ENCODE measurements at regions of chr11 and their contacts with region 1.

Region 1: DNA sequence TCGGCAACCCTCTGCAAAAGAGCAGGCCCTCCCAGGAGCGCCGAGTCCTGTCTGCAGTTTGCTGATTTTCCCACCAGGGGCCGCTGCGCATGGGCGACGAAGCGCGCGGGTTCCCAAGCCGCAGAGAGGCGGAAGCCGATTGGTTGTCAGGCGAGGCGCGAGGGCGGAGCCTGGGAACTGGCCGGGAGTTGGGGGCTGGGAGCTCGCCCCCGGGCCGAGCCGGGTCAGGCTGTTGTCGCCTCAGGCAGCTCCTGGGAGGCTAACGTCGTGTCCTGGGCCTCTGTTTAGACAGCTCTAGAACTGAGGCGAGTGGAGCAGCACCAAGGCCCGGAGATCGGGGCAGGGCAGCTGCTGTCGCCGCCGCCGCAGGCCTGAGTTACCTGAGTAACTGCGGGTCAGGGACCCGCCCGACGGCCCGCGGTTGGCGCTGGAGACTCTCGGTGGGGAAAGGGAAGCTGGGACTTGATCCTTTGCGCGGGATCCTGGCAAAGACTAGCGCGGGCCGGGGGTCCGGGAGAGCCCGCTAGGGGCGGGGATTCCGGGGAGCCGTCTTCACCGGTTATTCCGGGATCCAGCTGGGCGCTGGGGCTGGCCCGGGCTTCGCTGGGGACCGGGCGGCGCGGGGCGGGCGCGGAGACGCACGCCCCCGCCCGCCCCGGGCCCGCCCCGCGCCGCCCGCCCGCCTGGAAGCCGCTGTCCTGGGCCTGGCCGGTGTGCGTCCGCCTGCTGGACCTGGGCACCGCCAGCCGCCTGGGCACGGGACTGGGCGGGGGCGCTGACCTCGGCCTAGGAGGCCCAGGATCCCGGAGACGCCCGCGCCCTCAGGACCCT is at the start of gene STIM1:
- DNase-seq: peak; percentile 92 to 99 (median 97)
- ATAC-seq: peak; percentile 73 to 80 (median 74)
- H3K4me3 ChIP-seq: peak within 1 kb of the TSS; percentile 85 to 94
- H3K4me3 Mint-ChIP-seq: peak within 1 kb of the TSS; percentile 95 to 99 (median 98)
- H3K27ac ChIP-seq: peak within 1 kb of the TSS; percentile 96
- H3K27ac Mint-ChIP-seq: peak within 1 kb of the TSS; percentile 99
- H3K4me1 ChIP-seq: peaks cover 55 to 61% of the 10 kb centered on the region in 2 experiments
- H3K4me1 Mint-ChIP-seq: peaks cover 60 to 74% (median 68%) of the 10 kb centered on the region in 3 donors
- H3K27me3 ChIP-seq: no peaks in the 10 kb centered on the region
- H3K27me3 Mint-ChIP-seq: no peaks in the 10 kb centered on the region
- total RNA-seq, gene STIM1: 87.6 to 139 (median 94.5) TPM

Region 2: DNA sequence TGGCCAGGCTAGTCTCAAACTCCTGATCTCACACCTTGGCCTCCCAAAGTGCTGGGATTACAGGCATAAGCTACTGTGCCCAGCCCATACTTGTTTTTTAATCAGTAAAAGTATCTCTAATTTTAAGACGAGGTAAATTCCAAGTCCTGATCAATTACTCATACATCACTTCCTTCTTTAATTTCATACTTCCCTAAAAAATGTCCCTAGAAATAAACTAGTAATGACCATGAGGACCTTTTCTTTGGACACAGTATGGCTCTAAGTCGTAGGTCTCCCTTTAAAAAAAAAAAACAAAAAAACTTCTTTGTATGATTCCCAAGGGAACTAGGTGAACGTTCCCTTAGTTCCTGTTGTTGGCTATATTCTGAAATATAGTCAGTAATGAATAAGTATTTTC is 87.7 kb before region 1 on chr11:
- CTCF ChIA-PET with region 1: no interaction called
- POLR2A ChIA-PET with region 1: no interaction called
- DNase-seq: no peak
- ATAC-seq: no peak
- H3K4me3 ChIP-seq: no peak overlapping the region
- H3K4me3 Mint-ChIP-seq: no peak overlapping the region
- H3K27ac ChIP-seq: no peak overlapping the region
- H3K27ac Mint-ChIP-seq: no peak overlapping the region
- H3K4me1 ChIP-seq: no peaks in the 10 kb centered on the region
- H3K4me1 Mint-ChIP-seq: no peaks in the 10 kb centered on the region
- H3K27me3 ChIP-seq: no peaks in the 10 kb centered on the region
- H3K27me3 Mint-ChIP-seq: no peaks in the 10 kb centered on the region

Region 3: GRCh38 chr11:3835751-3836150 is 19.4 kb before region 1 on chr11:
- CTCF ChIA-PET with region 1: interaction called, 29 to 248 read pairs
- POLR2A ChIA-PET with region 1: interaction called, 4 to 58 read pairs
- DNase-seq: no peak
- ATAC-seq: no peak
- H3K4me3 ChIP-seq: no peak overlapping the region
- H3K4me3 Mint-ChIP-seq: peak overlapping the region; percentile 64 to 89 (median 68)
- H3K27ac ChIP-seq: peak overlapping the region; percentile 47
- H3K27ac Mint-ChIP-seq: peak overlapping the region; percentile 90 to 94
- H3K4me1 ChIP-seq: peaks cover 59 to 90% of the 10 kb centered on the region in 2 experiments
- H3K4me1 Mint-ChIP-seq: peaks cover 90 to 94% (median 91%) of the 10 kb centered on the region in 3 donors
- H3K27me3 ChIP-seq: no peaks in the 10 kb centered on the region
- H3K27me3 Mint-ChIP-seq: no peaks in the 10 kb centered on the region

Region 4: GRCh38 chr11:3841426-3842350 is 13.5 kb before region 1 on chr11:
- CTCF ChIA-PET with region 1: interaction called, 29 to 248 read pairs
- POLR2A ChIA-PET with region 1: interaction called, 12 to 58 read pairs
- DNase-seq: peak in 34 of 35 experiments; percentile 88 to 98 (median 96)
- ATAC-seq: peak; percentile 77 to 82 (median 78)
- H3K4me3 ChIP-seq: peak overlapping the region in 1 of 2 donors; percentile 88
- H3K4me3 Mint-ChIP-seq: peak overlapping the region; percentile 85 to 89 (median 86)
- H3K27ac ChIP-seq: peak overlapping the region; percentile 98
- H3K27ac Mint-ChIP-seq: peak overlapping the region; percentile 96
- H3K4me1 ChIP-seq: peaks cover 44 to 48% of the 10 kb centered on the region in 2 experiments
- H3K4me1 Mint-ChIP-seq: peaks cover 56 to 60% (median 56%) of the 10 kb centered on the region in 3 donors
- H3K27me3 ChIP-seq: no peaks in the 10 kb centered on the region
- H3K27me3 Mint-ChIP-seq: no peaks in the 10 kb centered on the region

Region 5: GRCh38 chr11:3867209-3868091 is 12.3 kb after region 1 on chr11:
- CTCF ChIA-PET with region 1: interaction called, 4 to 17 read pairs
- POLR2A ChIA-PET with region 1: interaction called, 3 to 5 read pairs
- DNase-seq: peak in 7 of 35 experiments; percentile 4 to 56 (median 18)
- ATAC-seq: peak; percentile 33 to 71 (median 49)
- H3K4me3 ChIP-seq: no peak overlapping the region
- H3K4me3 Mint-ChIP-seq: peak overlapping the region in 2 of 3 donors; percentile 47 to 58
- H3K27ac ChIP-seq: peak overlapping the region; percentile 34
- H3K27ac Mint-ChIP-seq: peak overlapping the region; percentile 83 to 92
- H3K4me1 ChIP-seq: peaks cover 54 to 63% of the 10 kb centered on the region in 2 experiments
- H3K4me1 Mint-ChIP-seq: peaks cover 90 to 96% (median 92%) of the 10 kb centered on the region in 3 donors
- H3K27me3 ChIP-seq: no peaks in the 10 kb centered on the region
- H3K27me3 Mint-ChIP-seq: no peaks in the 10 kb centered on the region

Region 6: DNA sequence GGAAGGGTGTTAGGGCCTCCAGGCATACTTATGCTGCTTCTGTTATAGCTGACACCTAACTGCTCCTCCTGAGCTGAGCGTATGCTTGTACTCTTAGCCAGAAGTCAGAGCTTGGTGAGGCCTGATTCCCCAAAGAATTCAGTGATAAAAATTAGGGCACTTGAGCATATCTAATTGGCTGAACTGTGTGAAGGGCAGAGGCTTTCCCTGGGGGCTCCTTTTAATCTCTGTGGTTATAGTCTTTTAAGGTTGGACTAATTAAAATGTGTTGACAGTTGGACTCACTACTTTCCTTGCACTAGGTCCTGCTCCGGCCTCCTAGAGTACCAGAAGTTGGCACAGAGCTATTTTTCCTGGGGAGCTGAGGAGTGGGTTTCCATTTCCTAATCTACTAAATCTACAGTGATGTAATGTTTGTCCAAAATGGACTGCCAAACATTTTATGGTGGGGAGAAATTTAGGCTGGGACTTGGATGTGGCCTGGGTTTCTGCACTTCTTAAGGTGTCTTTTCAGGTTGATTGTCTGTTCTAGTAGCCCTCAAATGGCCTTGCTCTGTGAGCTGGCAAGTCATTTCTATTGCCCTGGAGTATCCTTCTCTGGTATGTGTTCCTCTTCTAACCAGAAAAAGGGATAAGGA is 18.6 kb after region 1 on chr11:
- CTCF ChIA-PET with region 1: interaction called, 5 to 27 read pairs
- POLR2A ChIA-PET with region 1: interaction called, 4 to 5 read pairs
- DNase-seq: no peak
- ATAC-seq: no peak
- H3K4me3 ChIP-seq: no peak overlapping the region
- H3K4me3 Mint-ChIP-seq: no peak overlapping the region
- H3K27ac ChIP-seq: no peak overlapping the region
- H3K27ac Mint-ChIP-seq: peak overlapping the region; percentile 55 to 71
- H3K4me1 ChIP-seq: peaks cover 26 to 28% of the 10 kb centered on the region in 2 experiments
- H3K4me1 Mint-ChIP-seq: peaks cover 90 to 92% (median 91%) of the 10 kb centered on the region in 3 donors
- H3K27me3 ChIP-seq: no peaks in the 10 kb centered on the region
- H3K27me3 Mint-ChIP-seq: no peaks in the 10 kb centered on the region

Region 7: GRCh38 chr11:4065601-4066377 is 210.6 kb after region 1 on chr11:
- CTCF ChIA-PET with region 1: interaction called in 1 of 2 experiments, 28 read pairs
- POLR2A ChIA-PET with region 1: no interaction called
- DNase-seq: no peak
- ATAC-seq: no peak
- H3K4me3 ChIP-seq: no peak overlapping the region
- H3K4me3 Mint-ChIP-seq: no peak overlapping the region
- H3K27ac ChIP-seq: peak overlapping the region; percentile 17
- H3K27ac Mint-ChIP-seq: peak overlapping the region; percentile 84 to 86
- H3K4me1 ChIP-seq: peaks cover 12 to 45% of the 10 kb centered on the region in 2 experiments
- H3K4me1 Mint-ChIP-seq: peaks cover 68 to 71% (median 70%) of the 10 kb centered on the region in 3 donors
- H3K27me3 ChIP-seq: no peaks in the 10 kb centered on the region
- H3K27me3 Mint-ChIP-seq: no peaks in the 10 kb centered on the region